ENCODE measurements at regions of chr1 and their contacts with region 1.

Region 1: GRCh38 chr1:53959664-53960250 is 13.6 kb downstream of the LRRC42 start:
- DNase-seq: no peak
- H3K4me3 ChIP-seq: no peak overlapping the region
- H3K27ac ChIP-seq: no peak overlapping the region
- H3K4me1 ChIP-seq: peaks cover 0 to 18% (median 12%) of the 10 kb centered on the region in 4 donors
- H3K27me3 ChIP-seq: no peaks in the 10 kb centered on the region
- CTCF ChIP-seq: peak; percentile 36 to 77 (median 64)
- EP300 ChIP-seq: no peak
- POLR2A ChIP-seq: no peak

Region 2: GRCh38 chr1:53851571-53852285 is 108.0 kb before region 1 on chr1:
- in situ Hi-C with region 1: loop called in 2 of 4 experiments (anchors 10 to 25 kb)
- intact Hi-C with region 1: no loop called
- DNase-seq: no peak
- H3K4me3 ChIP-seq: no peak overlapping the region
- H3K27ac ChIP-seq: no peak overlapping the region
- H3K4me1 ChIP-seq: no peaks in the 10 kb centered on the region
- H3K27me3 ChIP-seq: no peaks in the 10 kb centered on the region
- CTCF ChIP-seq: no peak
- EP300 ChIP-seq: no peak
- POLR2A ChIP-seq: no peak

Region 3: GRCh38 chr1:53860967-53861411 is 98.8 kb before region 1 on chr1:
- in situ Hi-C with region 1: loop called in 3 of 4 experiments (anchors 10 to 25 kb)
- intact Hi-C with region 1: loop called (anchors 10 kb)
- DNase-seq: peak; percentile 24
- H3K4me3 ChIP-seq: no peak overlapping the region
- H3K27ac ChIP-seq: no peak overlapping the region
- H3K4me1 ChIP-seq: no peaks in the 10 kb centered on the region
- H3K27me3 ChIP-seq: no peaks in the 10 kb centered on the region
- CTCF ChIP-seq: peak; percentile 45 to 74 (median 64)
- EP300 ChIP-seq: no peak
- POLR2A ChIP-seq: no peak

Region 4: DNA sequence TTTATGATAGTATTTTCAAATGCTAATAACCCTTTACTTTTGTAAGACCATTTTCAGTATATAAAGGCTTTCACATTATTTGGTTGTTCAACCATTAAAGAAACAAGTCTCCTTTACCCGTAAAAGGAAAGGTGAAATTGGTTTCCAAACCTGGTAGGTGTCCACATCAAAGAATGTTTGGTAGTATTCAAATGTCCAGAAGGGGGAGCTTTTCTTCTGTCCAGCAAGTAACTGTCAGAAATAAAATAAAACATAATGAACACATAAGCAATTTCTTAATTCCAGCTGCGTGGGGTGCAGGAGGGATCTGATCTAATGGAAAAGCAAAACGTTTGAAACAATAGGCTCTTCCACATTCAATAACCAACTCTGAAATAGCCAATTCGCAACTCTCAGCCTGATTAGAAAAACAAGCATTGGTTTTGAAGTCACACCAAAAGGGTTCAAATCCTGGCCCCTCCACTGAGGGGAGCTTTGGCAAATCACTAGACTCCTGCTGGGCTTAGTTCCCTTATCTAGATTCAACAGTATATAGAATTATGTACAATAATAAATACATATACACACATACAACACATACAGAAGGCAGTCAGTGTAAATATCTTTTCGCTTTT is 81.2 kb before region 1 on chr1:
- in situ Hi-C with region 1: loop called in 3 of 4 experiments (anchors 10 to 25 kb)
- intact Hi-C with region 1: no loop called
- DNase-seq: no peak
- H3K4me3 ChIP-seq: no peak overlapping the region
- H3K27ac ChIP-seq: no peak overlapping the region
- H3K4me1 ChIP-seq: no peaks in the 10 kb centered on the region
- H3K27me3 ChIP-seq: no peaks in the 10 kb centered on the region
- CTCF ChIP-seq: peak; percentile 44 to 65 (median 58)
- EP300 ChIP-seq: no peak
- POLR2A ChIP-seq: no peak

Region 5: GRCh38 chr1:53889304-53890298 is 70.2 kb before region 1 on chr1 and contains the start of gene YIPF1:
- in situ Hi-C with region 1: loop called in 1 of 4 experiments (anchors 10 kb)
- intact Hi-C with region 1: no loop called
- DNase-seq: peak; percentile 93
- H3K4me3 ChIP-seq: peak within 1 kb of the TSS; percentile 51 to 98 (median 92)
- H3K27ac ChIP-seq: peak within 1 kb of the TSS; percentile 81 to 91 (median 86)
- H3K4me1 ChIP-seq: peaks cover 0 to 18% (median 11%) of the 10 kb centered on the region in 4 donors
- H3K27me3 ChIP-seq: no peaks in the 10 kb centered on the region
- CTCF ChIP-seq: no peak
- EP300 ChIP-seq: no peak
- POLR2A ChIP-seq: peak; percentile 58
- total RNA-seq, gene YIPF1: 10.1 to 24.6 (median 17.4) TPM